RWPE1 (cell line): ENCODE measurements at regions of chr3 and their contacts with region 1.

Region 1: DNA sequence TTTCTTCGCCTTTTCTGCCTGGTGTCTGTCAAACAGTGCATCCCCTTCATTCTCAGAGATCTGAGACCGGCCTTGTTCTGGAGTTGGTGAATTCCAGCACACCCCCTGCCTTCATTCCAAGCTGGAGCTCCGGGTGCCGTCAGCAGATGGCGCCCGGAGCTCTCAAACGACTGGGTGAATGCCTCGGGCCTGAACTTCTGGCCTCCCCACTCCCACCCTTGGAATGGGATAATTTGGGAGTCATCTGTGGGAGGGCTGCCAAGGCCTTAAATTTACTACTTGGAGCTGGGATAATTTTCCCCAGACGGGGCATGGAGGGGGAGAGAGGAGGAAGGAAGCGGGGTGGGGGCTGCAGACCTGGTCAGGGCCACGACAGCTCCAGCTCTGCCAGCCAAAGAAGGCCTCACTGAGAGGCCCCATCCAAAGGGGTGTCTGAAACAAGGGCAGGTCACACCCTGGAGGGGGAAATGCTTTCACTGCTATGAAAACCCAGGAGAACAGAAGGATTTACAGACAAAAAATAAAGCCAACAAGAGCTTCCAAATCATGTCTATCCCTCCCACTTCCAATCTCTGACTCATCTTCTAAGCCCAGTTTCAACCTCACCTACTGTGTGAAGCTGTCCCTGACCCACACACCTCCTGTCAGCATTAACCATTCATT is 187.9 kb downstream of the OPA1 start:
- DNase-seq: peak; percentile 97
- H3K27ac ChIP-seq: peak overlapping the region; percentile 95
- CTCF ChIP-seq: peak; percentile 89

Region 2: DNA sequence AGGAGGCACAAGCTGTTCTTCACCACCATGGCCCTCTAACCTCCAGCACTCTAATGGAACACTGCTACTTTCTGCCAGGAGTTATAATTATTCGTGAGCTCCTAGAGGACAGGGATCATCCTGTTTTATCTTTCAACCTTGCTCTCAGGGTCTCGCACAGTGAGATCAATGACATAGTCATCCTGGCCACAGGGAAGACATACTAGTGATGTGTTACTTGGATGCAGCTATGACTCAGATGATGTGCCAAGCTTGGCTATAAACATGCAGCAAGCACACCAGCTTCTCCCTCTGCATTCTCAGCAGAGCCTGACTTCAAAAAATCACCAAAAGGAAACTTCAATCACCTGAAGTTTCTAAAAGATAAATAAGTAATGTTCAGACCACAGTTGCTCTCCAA is 151.2 kb after region 1 on chr3:
- CTCF ChIA-PET with region 1: interaction called, 10 read pairs
- POLR2A ChIA-PET with region 1: no interaction called
- DNase-seq: no peak
- H3K27ac ChIP-seq: no peak overlapping the region
- CTCF ChIP-seq: no peak

Region 3: GRCh38 chr3:194134757-194135528 is 354.0 kb after region 1 on chr3:
- CTCF ChIA-PET with region 1: interaction called, 56 read pairs
- POLR2A ChIA-PET with region 1: interaction called, 13 read pairs
- DNase-seq: peak; percentile 93
- H3K27ac ChIP-seq: peak overlapping the region; percentile 97
- CTCF ChIP-seq: no peak

Region 4: GRCh38 chr3:194141415-194142155 is 360.6 kb after region 1 on chr3:
- CTCF ChIA-PET with region 1: interaction called, 56 read pairs
- POLR2A ChIA-PET with region 1: interaction called, 3 read pairs
- DNase-seq: peak; percentile 93
- H3K27ac ChIP-seq: peak overlapping the region; percentile 100
- CTCF ChIP-seq: no peak

Region 5: GRCh38 chr3:194204042-194204987 is 423.4 kb after region 1 on chr3:
- CTCF ChIA-PET with region 1: no interaction called
- POLR2A ChIA-PET with region 1: no interaction called
- DNase-seq: peak; percentile 33
- H3K27ac ChIP-seq: peak overlapping the region; percentile 75
- CTCF ChIP-seq: peak; percentile 13; the same call in 1 of the 2 replicates